ENCODE measurements at regions of chr1 and their contacts with region 1.

Region 1: GRCh38 chr1:101288491-101288944 is 51.7 kb downstream of the S1PR1 start:
- DNase-seq: peak; percentile 58 to 78 (median 67)
- H3K4me3 ChIP-seq: no peak overlapping the region
- H3K4me3 Mint-ChIP-seq: no peak overlapping the region
- H3K27ac ChIP-seq: no peak overlapping the region
- H3K27ac Mint-ChIP-seq: no peak overlapping the region
- H3K4me1 ChIP-seq: peaks cover 28 to 32% of the 10 kb centered on the region in 2 donors
- H3K4me1 Mint-ChIP-seq: peaks cover 31% of the 10 kb centered on the region
- H3K27me3 ChIP-seq: no peaks in the 10 kb centered on the region
- H3K27me3 Mint-ChIP-seq: no peaks in the 10 kb centered on the region
- CTCF ChIP-seq: peak; percentile 92

Region 2: DNA sequence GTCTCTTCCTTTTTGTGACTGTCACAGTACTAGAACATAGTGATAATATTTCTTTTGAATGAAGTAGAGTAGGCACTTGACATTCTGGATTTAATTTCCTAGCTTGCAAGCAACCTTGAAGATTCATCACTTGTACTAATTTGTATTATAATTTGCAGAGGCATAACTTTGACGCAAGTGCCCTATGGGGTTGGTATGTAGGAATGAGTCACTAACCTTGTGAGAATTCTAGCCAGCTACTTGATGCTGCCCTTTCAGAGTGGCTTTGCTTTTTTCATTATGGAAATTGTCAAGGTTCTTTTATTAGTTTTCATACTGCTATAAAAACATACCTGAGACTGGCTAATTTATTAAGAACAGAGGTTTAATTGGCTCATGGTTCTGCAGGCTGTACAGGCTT is 249.3 kb before region 1 on chr1:
- intact Hi-C with region 1: loop called in 1 of 2 experiments (anchors 10 kb)
- DNase-seq: no peak
- H3K4me3 ChIP-seq: no peak overlapping the region
- H3K4me3 Mint-ChIP-seq: no peak overlapping the region
- H3K27ac ChIP-seq: no peak overlapping the region
- H3K27ac Mint-ChIP-seq: no peak overlapping the region
- H3K4me1 ChIP-seq: no peaks in the 10 kb centered on the region
- H3K4me1 Mint-ChIP-seq: no peaks in the 10 kb centered on the region
- H3K27me3 ChIP-seq: no peaks in the 10 kb centered on the region
- H3K27me3 Mint-ChIP-seq: peaks cover 0 to 2% (median 0%) of the 10 kb centered on the region in 3 donors
- CTCF ChIP-seq: no peak

Region 3: DNA sequence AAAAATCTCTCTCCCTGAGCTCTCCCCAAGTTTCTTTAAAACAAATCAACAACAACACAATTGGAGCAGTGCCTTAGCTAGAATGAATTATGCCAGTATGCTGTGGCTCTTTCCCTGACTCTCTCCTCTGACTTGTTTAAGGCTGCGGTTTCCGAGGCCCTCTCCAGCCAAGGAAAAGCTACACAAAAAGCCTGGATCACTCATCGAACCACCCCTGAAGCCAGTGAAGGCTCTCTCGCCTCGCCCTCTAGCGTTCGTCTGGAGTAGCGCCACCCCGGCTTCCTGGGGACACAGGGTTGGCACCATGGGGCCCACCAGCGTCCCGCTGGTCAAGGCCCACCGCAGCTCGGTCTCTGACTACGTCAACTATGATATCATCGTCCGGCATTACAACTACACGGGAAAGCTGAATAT is 49.8 kb before region 1 on chr1:
- intact Hi-C with region 1: loop called in 1 of 2 experiments (anchors 5 kb)
- DNase-seq: peak; percentile 59 to 78 (median 73)
- H3K4me3 ChIP-seq: peak overlapping the region in 1 of 3 experiments; percentile 49
- H3K4me3 Mint-ChIP-seq: peak overlapping the region; percentile 73 to 99
- H3K27ac ChIP-seq: no peak overlapping the region
- H3K27ac Mint-ChIP-seq: peak overlapping the region in 3 of 7 donors; percentile 68 to 79 (median 69)
- H3K4me1 ChIP-seq: peaks cover 27 to 37% of the 10 kb centered on the region in 2 donors
- H3K4me1 Mint-ChIP-seq: peaks cover 36% of the 10 kb centered on the region
- H3K27me3 ChIP-seq: peaks cover 16 to 40% of the 10 kb centered on the region in 2 donors
- H3K27me3 Mint-ChIP-seq: peaks cover 44 to 55% (median 49%) of the 10 kb centered on the region in 3 donors
- CTCF ChIP-seq: peak; percentile 98

Region 4: GRCh38 chr1:101547357-101547756 is 258.8 kb after region 1 on chr1:
- intact Hi-C with region 1: no loop called
- DNase-seq: no peak
- H3K4me3 ChIP-seq: no peak overlapping the region
- H3K4me3 Mint-ChIP-seq: no peak overlapping the region
- H3K27ac ChIP-seq: no peak overlapping the region
- H3K27ac Mint-ChIP-seq: no peak overlapping the region
- H3K4me1 ChIP-seq: no peaks in the 10 kb centered on the region
- H3K4me1 Mint-ChIP-seq: no peaks in the 10 kb centered on the region
- H3K27me3 ChIP-seq: no peaks in the 10 kb centered on the region
- H3K27me3 Mint-ChIP-seq: peaks cover 0 to 2% (median 2%) of the 10 kb centered on the region in 3 donors
- CTCF ChIP-seq: no peak

Measured in CD14-positive monocyte (primary cell).